GM10248 (cell line): ENCODE measurements at regions of chr17 and their contacts with region 1.

Region 1: GRCh38 chr17:66567234-66568170 is 265.1 kb downstream of the PRKCA start:
- DNase-seq: peak; percentile 71
- CTCF ChIP-seq: peak; percentile 83

Region 2: DNA sequence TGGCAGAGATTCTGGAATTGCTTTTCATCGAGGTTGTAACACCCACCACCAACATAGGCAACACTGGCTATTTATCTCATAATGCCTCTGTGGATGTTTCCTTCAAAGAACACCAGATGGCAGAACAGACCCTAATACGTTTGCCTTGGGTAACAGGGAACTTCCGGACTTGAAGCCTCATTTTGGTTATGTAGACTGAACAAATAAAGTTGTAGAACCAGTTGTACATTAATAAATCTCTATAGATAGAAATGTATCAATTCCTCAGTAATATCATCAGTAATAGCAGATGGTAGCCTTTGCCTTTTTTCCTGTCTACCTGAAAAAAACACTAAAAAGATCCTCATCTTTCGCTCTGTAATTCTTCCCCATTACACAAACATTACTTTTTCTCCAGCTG is 312.4 kb before region 1 on chr17:
- CTCF ChIA-PET with region 1: interaction called, 10 read pairs
- POLR2A ChIA-PET with region 1: no interaction called
- DNase-seq: peak; percentile 48
- CTCF ChIP-seq: peak; percentile 46

Region 3: DNA sequence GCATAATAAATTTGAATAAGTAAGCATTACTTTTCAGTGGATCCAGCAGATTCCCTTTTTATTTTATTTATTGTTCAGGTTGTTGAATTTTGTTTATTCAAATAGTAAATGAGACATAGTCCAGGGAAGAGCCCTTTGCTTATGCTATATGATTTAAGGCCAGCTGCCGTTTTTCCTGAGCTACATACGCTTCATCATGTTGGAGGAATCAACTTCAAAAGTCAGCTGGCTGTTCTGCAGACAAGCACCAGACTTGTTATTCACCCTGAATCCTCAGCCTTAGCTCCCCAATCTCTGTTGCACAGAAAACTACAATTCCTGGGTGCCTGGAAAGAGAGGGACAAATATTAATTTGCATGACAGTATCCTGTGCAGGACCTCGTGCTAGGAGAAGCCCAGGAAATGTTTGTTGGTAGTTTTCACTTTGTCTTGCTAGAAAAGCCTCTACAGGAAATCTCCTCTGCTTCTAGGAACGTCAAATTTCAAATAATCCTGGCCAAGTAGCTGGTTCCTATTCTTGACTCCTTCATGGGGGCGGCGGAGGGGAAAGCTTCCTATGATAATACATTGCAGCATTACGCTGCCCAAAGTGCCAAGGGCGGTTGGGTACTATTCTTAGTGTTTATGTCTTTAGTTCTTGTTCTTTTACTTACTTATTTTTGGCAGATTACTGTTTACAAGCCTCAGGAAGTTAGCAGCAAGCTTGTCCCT is 163.5 kb before region 1 on chr17:
- CTCF ChIA-PET with region 1: interaction called, 10 read pairs
- POLR2A ChIA-PET with region 1: no interaction called
- DNase-seq: no peak
- CTCF ChIP-seq: no peak

Region 4: GRCh38 chr17:66426397-66427033 is 141.0 kb before region 1 on chr17:
- CTCF ChIA-PET with region 1: no interaction called
- POLR2A ChIA-PET with region 1: no interaction called
- DNase-seq: peak; percentile 33
- CTCF ChIP-seq: peak; percentile 11

Region 5: DNA sequence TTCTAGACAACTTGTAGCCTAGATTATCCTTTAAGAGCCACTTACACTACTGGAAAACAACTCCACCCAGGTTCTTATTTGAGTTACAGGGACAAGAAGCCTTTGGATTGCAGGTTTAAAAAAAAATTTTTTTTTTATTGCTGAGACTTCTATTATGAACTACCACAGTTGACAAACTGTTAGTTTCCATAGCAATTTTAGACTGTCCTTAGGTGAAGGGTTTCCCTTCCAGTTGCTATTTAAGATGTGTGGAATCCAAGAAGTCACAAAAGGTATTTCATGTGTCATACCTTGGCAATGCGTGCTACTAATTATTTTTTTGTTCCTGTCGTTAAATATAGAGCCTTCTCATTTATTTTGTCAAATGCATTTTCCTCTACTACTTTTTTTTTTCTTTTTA is 11.9 kb before region 1 on chr17:
- CTCF ChIA-PET with region 1: interaction called, 11 read pairs
- POLR2A ChIA-PET with region 1: no interaction called
- DNase-seq: no peak
- CTCF ChIP-seq: no peak

Region 6: DNA sequence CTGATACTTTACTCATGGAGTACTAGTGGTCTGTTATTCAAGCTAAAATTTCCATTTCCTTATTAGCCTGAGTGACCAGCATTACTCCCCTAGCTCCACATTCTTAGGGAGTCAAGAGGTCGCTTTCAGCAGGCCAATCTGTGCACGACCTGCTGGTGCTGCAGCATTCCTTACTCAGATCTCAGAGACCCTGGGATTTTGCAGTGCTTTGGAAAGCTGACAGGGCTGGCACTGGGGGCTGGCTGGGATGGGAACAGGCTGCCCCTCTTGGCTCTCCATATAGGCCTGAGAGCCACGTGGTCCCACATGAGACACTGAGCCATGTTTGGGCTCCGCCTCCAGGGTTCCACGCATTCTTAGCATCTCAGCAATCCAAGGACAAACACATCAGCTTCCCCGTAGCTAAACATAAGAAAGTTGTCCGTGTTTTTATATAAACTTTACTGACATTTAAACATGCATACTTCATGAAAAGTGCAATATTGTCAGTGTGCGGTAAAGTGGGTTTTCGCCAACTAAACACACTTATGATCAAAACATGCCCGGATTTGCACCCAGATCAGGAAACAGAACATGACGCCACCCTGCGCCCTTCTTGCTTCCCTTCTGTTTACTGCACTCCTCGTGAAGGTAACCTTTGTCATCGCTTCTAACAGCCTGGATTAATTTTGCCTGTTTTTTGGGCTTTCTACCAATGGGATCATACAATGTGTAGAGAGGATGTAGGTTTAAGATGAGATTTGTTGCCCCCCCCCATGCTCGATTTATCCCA is 12.9 kb after region 1 on chr17:
- CTCF ChIA-PET with region 1: interaction called, 13 read pairs
- POLR2A ChIA-PET with region 1: no interaction called
- DNase-seq: no peak
- CTCF ChIP-seq: no peak

Region 7: DNA sequence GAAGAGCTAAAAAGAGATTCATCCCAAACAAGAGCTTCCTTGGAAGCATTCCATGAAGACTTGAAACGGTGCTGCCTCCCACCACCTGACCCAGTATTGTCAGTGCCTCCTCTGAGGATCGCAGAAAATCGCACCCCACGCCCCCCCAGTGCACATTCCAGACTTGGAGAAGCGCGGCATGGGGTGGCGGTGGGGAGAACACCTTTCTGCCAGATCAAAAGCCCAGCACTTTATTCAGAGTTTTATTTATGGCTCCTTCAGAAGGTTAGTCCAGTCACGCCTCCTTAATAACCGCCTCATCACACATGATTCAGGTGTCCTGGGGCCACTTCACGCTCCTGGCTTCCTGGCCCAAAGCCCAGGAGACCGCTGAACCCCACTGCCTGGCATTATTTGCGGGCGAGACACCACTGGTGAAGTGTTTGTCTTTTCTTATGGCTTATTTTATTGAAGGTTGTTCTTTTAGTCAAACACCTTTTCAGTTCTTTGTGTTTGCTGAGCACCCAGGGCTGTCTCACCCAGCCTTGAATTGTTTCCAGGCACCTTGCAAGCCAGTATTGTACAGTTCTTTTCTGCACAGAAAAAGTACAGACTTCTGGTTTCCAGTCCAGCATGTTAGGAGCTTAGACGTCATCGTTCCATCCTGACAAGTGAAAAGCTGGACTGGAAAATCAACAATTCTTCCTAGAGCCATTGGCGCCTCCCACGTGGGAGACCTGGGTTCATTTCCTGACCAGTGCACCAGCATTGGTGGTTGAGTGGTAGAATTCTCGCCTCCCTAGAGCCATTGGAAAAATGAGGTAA is 187.8 kb after region 1 on chr17:
- CTCF ChIA-PET with region 1: no interaction called
- POLR2A ChIA-PET with region 1: no interaction called
- DNase-seq: no peak
- CTCF ChIP-seq: no peak